Posterior vena cava (tissue), 2 donors: ENCODE measurements at regions of chr14 and their contacts with region 1.

Region 1: DNA sequence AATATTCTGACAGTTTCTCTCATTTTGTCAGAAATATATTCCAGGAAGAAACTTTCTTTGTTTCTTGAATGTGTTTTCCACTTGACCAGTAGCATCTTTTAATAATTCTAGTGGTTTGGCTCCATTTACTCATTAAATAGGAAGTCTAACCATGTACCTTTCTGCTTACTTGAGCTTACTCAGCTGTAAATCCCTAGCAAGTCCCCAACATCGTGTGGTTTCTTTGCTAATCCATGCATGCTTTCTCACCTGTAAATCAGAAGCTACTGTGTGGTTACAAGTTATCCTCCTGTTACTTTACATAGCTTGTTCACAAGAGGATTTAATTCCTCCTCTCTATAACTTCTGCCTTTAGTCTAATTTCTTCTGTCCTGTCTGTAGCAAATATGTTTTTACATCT is 227.7 kb downstream of the FSCB start:
- DNase-seq: no peak

Region 2: GRCh38 chr14:44316647-44317433 is 37.5 kb after region 1 on chr14:
- intact Hi-C with region 1: loop called in 1 of 2 experiments (anchors 2 kb)
- DNase-seq: no peak

Region 3: DNA sequence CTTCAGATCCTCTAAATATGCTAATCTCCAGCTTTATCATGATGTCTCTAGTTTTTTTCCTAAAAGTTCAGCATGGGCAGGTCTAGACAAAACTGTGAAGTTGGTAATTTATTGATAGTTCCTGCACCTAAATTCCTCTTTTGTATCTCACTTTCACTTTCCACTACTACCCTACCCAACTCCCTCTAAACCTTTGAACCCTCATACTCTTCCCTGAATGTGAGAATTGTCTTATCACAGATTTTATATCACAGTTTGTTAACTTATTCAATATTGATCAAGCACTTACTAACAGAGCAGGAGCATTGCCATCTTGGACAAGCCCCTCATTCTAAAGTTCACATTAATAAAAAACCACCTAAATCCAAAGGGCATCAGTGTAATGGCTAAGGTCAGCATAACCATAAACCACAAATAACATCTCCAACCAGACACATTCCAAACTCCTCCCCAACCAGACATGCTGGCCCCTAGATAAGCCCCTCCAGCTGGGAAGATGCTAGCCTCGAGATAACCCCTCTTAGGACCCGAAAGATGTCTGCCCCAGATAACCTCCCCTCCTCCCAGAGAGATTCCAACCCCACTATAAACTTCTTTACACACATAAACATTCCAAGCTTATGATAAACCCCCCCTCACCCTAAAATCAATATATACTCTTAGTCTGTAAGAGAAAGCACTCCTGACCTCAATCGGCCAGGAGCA is 149.0 kb after region 1 on chr14:
- intact Hi-C with region 1: no loop called
- DNase-seq: no peak